Ascending aorta (tissue), 2 donors: ENCODE measurements at regions of chrX and their contacts with region 1.

Region 1: DNA sequence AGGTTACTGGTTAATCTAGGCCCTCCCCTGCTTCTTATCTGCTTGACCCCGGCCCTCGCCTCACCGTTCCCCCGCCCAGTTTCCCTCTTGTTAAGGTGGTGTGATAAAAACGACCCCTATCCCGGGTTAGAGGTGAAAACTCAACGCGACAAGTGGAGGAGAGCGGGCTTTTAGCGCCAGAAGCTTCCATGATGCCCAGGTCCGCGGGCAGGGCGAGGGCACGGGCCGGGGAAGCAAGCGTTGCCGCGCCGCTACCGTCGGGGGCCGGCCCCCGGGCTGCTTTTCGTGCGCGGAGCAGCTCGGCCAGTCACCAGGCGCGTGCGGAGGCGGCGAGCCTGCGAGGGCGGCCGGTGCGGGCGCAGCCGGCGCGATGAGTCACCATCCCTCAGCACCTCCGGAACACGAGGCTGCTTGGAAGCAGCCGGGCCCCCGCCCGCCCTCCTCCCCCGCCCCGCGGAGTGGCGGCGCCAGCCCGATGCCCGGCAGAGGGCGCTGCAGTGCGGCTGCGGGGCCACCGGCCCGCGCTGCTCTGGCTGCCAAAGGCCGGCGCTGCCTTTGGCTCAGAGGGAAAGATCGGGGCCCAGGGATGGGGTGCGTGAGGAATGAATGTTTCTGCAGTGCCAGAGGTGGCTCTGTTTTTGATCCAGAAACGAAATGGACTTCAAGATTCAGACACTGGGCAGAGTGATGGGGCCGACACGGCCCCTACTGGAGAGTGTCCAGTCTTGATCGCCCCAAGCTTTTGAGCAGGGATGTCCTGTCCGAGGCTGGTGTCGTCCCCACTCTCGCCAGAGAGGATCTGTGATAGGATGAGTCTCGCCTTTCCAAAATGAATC is 107.8 kb downstream of the NHSL2 start:
- DNase-seq: peak; percentile 55 to 93
- H3K4me3 ChIP-seq: peak overlapping the region in 1 of 2 donors; percentile 29
- H3K27ac ChIP-seq: peak overlapping the region; percentile 22 to 46
- H3K4me1 ChIP-seq: no peaks in the 10 kb centered on the region
- H3K27me3 ChIP-seq: peaks cover 4% of the 10 kb centered on the region
- CTCF ChIP-seq: peak; percentile 28 to 84 (median 59)

Region 2: GRCh38 chrX:71910643-71910985 is 107.9 kb before region 1 on chrX and contains the start of gene NHSL2:
- intact Hi-C with region 1: no loop called
- DNase-seq: no peak
- H3K4me3 ChIP-seq: peak within 1 kb of the TSS; percentile 45 to 60
- H3K27ac ChIP-seq: peak within 1 kb of the TSS in 1 of 2 donors; percentile 30
- H3K4me1 ChIP-seq: no peaks in the 10 kb centered on the region
- H3K27me3 ChIP-seq: peaks cover 10% of the 10 kb centered on the region
- CTCF ChIP-seq: no peak
- total RNA-seq, gene NHSL2: 58.1 TPM

Region 3: DNA sequence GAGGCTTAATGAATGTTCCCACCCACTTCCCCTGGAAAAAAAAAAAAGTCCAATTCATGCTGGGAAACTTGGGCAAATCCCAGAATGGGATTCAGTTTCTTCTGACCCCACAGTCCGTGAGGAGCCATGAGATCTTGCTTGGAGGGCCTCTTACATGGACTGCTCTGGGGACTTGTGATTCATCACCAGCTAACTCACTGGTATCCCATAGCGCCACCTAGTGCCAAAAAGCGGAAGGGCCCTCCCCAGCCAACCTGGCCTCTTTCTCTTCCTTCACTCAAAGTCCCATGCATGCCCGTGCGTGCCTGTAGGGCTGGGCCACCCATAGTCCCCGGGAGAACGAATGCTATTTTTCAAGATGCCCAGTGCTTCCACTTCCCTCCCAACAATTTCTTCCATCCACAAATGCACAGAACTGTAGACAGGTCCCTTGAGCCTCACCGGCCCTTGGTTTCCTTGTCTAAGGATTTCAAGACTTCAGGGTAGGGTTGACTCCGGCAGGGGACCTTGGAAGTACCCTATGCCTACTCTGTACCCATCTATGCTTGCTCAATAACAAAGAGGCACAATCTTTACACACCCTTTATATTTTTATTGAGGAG is 108.1 kb after region 1 on chrX:
- intact Hi-C with region 1: loop called (anchors 1 kb)
- DNase-seq: peak; percentile 56 to 94
- H3K4me3 ChIP-seq: no peak overlapping the region
- H3K27ac ChIP-seq: peak overlapping the region; percentile 77 to 81
- H3K4me1 ChIP-seq: peaks cover 4 to 17% of the 10 kb centered on the region in 2 donors
- H3K27me3 ChIP-seq: no peaks in the 10 kb centered on the region
- CTCF ChIP-seq: peak; percentile 69 to 81 (median 77)

Region 4: DNA sequence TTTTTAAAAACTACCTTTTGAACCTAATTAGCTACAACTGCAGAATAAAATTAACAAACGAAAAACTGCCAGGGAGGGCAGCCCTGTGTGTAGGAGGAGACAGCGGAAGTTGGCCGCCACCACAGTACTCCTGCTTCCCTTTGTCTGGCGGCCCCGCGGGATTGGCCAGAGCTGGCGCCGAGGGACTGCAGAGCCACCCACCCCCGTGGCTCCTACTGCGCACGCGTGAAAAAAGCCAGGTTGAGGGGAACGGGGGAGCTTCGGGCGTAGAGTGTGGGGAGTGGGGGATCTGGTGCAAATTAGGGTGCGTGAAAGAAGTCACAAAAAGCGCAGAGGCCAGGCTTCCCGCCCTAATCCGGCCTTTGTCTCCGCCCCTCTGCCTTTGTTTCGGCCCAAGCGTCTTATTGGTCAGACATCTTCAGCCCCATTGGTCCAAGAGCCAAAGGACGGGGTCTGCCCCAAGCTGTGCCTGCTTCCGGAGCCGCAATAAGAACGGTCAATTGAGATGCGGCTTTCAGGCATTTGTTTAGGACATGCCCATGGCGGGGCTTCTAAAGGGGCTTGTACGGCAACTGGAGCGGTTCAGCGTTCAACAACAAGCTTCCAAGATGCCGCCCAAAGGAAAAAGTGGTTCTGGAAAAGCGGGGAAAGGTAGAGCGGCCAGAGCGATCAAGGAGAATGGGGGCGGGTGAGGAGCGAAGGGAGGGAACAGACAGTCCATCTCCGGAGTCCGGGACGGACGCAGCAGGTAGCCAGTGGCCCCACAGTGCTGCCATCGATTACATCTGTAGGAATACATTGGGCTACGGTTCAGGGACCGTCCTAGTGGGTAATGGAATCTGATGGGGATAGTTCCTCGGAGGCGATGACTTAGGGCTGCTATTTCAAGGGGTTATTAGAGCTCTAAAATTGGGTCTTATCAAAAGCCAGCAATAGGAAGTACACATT is 163.0 kb after region 1 on chrX and contains the start of gene PIN4:
- intact Hi-C with region 1: loop called (anchors 5 kb)
- DNase-seq: peak; percentile 65 to 94
- H3K4me3 ChIP-seq: peak within 1 kb of the TSS; percentile 69 to 71
- H3K27ac ChIP-seq: peak within 1 kb of the TSS; percentile 68 to 72
- H3K4me1 ChIP-seq: peaks cover 0 to 4% of the 10 kb centered on the region in 2 donors
- H3K27me3 ChIP-seq: no peaks in the 10 kb centered on the region
- CTCF ChIP-seq: no peak
- total RNA-seq, gene PIN4: 3.6 TPM

Region 5: GRCh38 chrX:72306851-72307645 is 288.6 kb after region 1 on chrX:
- intact Hi-C with region 1: loop called (anchors 10 kb)
- DNase-seq: peak in 1 of 2 donors; percentile 76
- H3K4me3 ChIP-seq: peak overlapping the region; percentile 60 to 79
- H3K27ac ChIP-seq: no peak overlapping the region
- H3K4me1 ChIP-seq: peaks cover 11 to 12% of the 10 kb centered on the region in 2 donors
- H3K27me3 ChIP-seq: peaks cover 8% of the 10 kb centered on the region
- CTCF ChIP-seq: no peak

Region 6: DNA sequence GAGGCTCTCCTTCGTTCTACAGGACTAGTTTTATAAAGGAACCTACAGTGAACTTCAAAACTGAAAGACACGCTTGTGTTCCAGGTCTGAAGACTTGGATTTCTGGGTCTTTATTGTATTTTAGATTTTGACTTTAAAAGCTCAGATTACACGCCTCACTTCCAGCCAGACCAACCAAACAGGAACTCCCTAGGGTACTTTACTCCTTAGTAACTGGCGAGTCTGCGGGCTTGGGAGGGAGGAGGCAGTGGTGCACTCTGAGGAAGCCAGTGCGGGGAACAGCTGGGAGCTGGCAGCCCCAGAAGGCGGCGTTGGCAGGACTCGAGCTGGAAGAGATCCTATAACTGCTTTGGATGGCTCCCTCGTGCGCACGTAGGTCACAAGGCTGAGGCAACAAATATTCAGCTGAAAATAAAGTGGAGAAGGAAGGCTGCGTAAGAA is 696.0 kb after region 1 on chrX:
- intact Hi-C with region 1: loop called (anchors 2 kb)
- DNase-seq: peak; percentile 52 to 87
- H3K4me3 ChIP-seq: peak overlapping the region; percentile 49 to 69
- H3K27ac ChIP-seq: peak overlapping the region; percentile 82 to 85
- H3K4me1 ChIP-seq: no peaks in the 10 kb centered on the region
- H3K27me3 ChIP-seq: no peaks in the 10 kb centered on the region
- CTCF ChIP-seq: no peak